Activated CD4-positive, alpha-beta memory T cell treated with anti-CD3 and anti-CD28 coated beads for 36 hours (primary cell): ENCODE measurements at regions of chr19 and their contacts with region 1.

Region 1: GRCh38 chr19:52527134-52527955 is at the start of gene ZNF808:
- DNase-seq: peak; percentile 99
- H3K4me3 Mint-ChIP-seq: peak within 1 kb of the TSS; percentile 96
- H3K27ac Mint-ChIP-seq: peak within 1 kb of the TSS; percentile 92
- H3K4me1 Mint-ChIP-seq: peaks cover 18% of the 10 kb centered on the region
- H3K27me3 Mint-ChIP-seq: no peaks in the 10 kb centered on the region
- total RNA-seq, gene ZNF808: 31.8 to 32.9 TPM

Region 2: DNA sequence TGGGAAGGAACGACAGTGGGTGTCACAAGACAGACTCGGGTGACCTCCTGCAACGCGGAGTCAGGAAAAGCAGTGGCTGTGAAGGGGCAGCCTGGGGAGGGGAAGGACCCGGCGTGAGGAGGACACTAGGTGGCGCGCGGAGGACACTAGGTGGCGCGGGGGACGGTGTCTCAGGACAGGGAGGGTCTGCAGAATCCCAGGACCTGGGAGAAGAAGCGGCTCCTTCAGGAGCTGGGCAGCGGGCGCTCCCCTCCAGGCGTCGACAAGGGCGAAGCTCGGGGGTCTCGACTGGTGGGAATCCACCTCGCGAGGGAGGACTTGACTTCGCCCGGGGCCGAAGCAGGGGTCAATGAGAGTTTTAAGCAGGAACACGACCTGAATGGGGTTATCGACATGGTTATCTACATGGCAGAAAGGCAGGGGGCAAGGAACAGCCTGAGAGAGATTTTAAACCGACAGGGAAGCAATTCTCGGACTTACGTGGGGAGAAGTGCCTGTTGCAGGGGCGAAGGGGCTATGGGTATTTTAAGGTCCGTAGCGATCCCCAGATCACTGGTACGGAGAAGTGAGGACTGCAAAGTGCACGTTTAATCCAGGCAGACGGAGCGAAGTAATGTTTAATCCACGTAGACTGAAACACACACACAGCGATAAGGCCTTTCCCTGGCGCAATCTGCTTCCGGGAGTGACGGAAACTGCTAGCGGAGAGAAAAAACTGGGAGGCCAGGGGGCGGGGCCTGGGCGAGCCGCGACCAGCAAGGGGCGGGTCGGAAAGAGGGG is 387.9 kb before region 1 on chr19 and contains the start of gene ZNF616:
- CTCF ChIA-PET with region 1: no interaction called
- POLR2A ChIA-PET with region 1: no interaction called
- intact Hi-C with region 1: loop called (anchors 1 kb)
- DNase-seq: peak; percentile 99
- H3K4me3 Mint-ChIP-seq: peak within 1 kb of the TSS; percentile 92
- H3K27ac Mint-ChIP-seq: peak within 1 kb of the TSS; percentile 95
- H3K4me1 Mint-ChIP-seq: peaks cover 22% of the 10 kb centered on the region
- H3K27me3 Mint-ChIP-seq: no peaks in the 10 kb centered on the region
- total RNA-seq, gene ZNF616: 10.5 to 11.6 TPM

Region 3: DNA sequence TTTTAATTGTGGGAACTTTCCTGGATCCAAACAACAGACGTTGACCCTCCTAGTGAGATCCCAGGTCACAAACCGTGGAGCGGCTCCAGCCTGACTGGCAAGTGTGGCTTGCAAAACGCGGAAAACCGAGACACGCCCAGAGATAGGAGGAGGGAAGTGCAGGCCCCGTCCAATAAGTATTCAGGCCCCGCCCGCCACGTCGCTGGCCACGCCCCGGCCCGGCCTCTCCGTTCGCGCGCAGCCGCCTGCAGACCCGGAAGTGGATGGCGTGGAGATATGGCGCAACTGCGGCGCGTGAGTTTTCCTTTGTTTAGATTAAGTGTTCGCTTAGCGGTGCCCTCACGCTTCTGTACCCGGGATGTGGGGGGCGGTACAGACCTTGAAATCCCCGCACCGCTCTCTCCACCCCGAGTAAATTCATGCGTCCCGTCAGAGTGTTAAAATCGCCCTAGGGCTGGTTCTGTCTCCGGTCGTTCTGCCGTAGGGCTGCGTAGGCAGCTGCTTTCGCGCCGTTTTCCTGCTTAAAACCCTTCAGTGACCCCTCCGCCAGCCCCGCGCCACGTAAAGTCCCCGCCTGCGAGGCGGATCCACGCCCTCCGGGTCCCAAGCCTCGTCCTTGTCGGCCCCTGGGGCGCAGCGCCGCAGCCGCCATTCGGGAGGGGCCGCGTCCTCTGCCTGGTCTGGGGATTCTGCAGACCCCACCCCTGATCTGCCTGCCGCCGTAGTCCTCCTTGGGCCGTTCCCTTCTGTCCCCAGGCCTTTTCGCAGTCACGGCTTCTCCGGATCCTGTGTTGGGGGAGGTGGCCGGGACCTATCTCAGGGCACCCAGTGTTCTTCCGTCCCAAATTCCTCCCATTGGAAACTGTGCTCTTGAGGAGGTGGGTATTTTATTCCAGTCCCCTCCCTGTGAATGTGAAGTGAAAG is 257.7 kb before region 1 on chr19 and contains the start of gene ZNF766:
- CTCF ChIA-PET with region 1: no interaction called
- POLR2A ChIA-PET with region 1: no interaction called
- intact Hi-C with region 1: loop called (anchors 1 kb)
- DNase-seq: peak; percentile 98
- H3K4me3 Mint-ChIP-seq: peak within 1 kb of the TSS; percentile 96
- H3K27ac Mint-ChIP-seq: peak within 1 kb of the TSS; percentile 95
- H3K4me1 Mint-ChIP-seq: peaks cover 37% of the 10 kb centered on the region
- H3K27me3 Mint-ChIP-seq: no peaks in the 10 kb centered on the region
- total RNA-seq, gene ZNF766: 21.6 to 23.2 TPM

Region 4: DNA sequence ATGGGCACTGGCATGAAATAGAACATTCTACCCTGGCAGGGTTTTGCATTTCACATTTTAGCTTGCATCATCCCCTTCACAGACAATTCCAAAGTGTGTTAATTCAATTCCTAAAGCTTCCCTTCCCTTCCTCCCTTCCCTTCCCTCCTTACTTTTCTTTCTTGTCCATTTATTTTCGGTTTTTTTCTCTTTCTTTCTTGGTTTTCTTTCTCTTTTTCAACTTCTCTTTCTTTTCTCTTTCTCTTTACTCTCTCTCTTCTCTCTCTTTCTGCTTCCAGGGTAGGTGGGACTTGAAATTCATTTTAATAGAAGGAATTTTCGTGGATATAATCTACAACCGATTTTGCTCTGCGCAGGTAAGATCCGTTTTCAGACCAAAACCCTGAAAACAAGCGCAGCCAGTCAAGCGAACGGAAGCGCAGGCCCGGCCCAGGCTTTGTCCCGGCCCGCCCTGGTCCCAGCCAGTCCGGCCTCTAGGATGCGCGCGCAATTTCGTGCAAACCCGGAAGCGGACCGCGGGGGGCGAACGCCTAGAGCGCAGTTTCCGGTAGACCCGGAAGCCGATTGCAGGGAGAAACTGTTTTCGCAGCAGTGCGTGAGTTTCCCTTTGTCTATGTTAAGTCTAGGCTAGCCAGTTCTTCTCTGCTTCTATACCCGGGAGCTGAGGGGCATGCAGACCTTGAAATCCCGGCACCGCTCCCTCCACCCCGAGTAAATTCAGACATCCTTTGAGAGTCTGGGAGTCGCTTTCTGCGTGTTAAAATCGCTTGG is 129.8 kb before region 1 on chr19 and contains the start of gene ZNF528:
- CTCF ChIA-PET with region 1: no interaction called
- POLR2A ChIA-PET with region 1: no interaction called
- intact Hi-C with region 1: loop called (anchors 1 kb)
- DNase-seq: peak; percentile 96
- H3K4me3 Mint-ChIP-seq: peak within 1 kb of the TSS; percentile 81
- H3K27ac Mint-ChIP-seq: peak within 1 kb of the TSS; percentile 76
- H3K4me1 Mint-ChIP-seq: peaks cover 19% of the 10 kb centered on the region
- H3K27me3 Mint-ChIP-seq: no peaks in the 10 kb centered on the region
- total RNA-seq, gene ZNF528: 4.4 to 8.1 TPM

Region 5: GRCh38 chr19:52601025-52601973 is 74.0 kb after region 1 on chr19:
- CTCF ChIA-PET with region 1: no interaction called
- POLR2A ChIA-PET with region 1: no interaction called
- intact Hi-C with region 1: loop called (anchors 2 kb)
- DNase-seq: peak; percentile 96
- H3K4me3 Mint-ChIP-seq: peak overlapping the region; percentile 83
- H3K27ac Mint-ChIP-seq: peak overlapping the region; percentile 58
- H3K4me1 Mint-ChIP-seq: peaks cover 14% of the 10 kb centered on the region
- H3K27me3 Mint-ChIP-seq: no peaks in the 10 kb centered on the region

Region 6: GRCh38 chr19:53103198-53103944 is 576.0 kb after region 1 on chr19 and contains the start of gene ZNF160:
- CTCF ChIA-PET with region 1: no interaction called
- POLR2A ChIA-PET with region 1: no interaction called
- intact Hi-C with region 1: loop called (anchors 5 kb)
- DNase-seq: peak; percentile 99
- H3K4me3 Mint-ChIP-seq: peak within 1 kb of the TSS; percentile 89
- H3K27ac Mint-ChIP-seq: peak within 1 kb of the TSS; percentile 81
- H3K4me1 Mint-ChIP-seq: peaks cover 28% of the 10 kb centered on the region
- H3K27me3 Mint-ChIP-seq: peaks cover 2% of the 10 kb centered on the region
- total RNA-seq, gene ZNF160: 26.3 to 28.9 TPM